T-cell (primary cell): ENCODE measurements at regions of chr3 and their contacts with region 1.

Region 1: DNA sequence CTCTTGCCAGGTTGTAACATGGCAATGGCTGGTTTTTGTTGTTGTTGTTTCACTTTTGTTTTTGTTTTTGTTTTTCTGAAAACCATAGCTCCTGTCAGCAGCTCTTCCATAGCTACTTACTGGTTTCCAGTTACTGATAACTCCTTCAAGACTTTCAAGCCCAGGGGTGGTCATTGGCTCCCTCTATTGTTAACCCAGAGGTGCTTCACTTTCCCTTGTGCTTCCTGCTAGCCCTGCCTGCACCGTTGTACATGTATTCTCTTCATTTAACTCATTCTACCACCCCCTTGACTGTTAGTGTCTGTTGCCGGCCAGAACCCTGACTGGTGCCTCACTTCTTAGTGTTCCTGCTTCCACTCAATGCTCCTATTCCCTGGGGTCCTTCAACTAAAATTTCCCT is 4.2 kb upstream of the TRAT1 start:
- DNase-seq: peak in 33 of 35 experiments; percentile 28 to 80 (median 57)
- ATAC-seq: peak; percentile 76 to 92 (median 88)
- H3K4me3 ChIP-seq: no peak overlapping the region
- H3K4me3 Mint-ChIP-seq: peak overlapping the region in 1 of 3 donors; percentile 18
- H3K27ac ChIP-seq: peak overlapping the region; percentile 40
- H3K27ac Mint-ChIP-seq: peak overlapping the region; percentile 71 to 86
- H3K4me1 ChIP-seq: peaks cover 14 to 21% of the 10 kb centered on the region in 2 experiments
- H3K4me1 Mint-ChIP-seq: peaks cover 30 to 35% (median 33%) of the 10 kb centered on the region in 3 donors
- H3K27me3 ChIP-seq: no peaks in the 10 kb centered on the region
- H3K27me3 Mint-ChIP-seq: no peaks in the 10 kb centered on the region

Region 2: GRCh38 chr3:108178676-108179075 is 639.7 kb before region 1 on chr3:
- CTCF ChIA-PET with region 1: no interaction called
- POLR2A ChIA-PET with region 1: no interaction called
- DNase-seq: no peak
- ATAC-seq: no peak
- H3K4me3 ChIP-seq: no peak overlapping the region
- H3K4me3 Mint-ChIP-seq: no peak overlapping the region
- H3K27ac ChIP-seq: no peak overlapping the region
- H3K27ac Mint-ChIP-seq: no peak overlapping the region
- H3K4me1 ChIP-seq: peaks cover 0 to 4% of the 10 kb centered on the region in 2 experiments
- H3K4me1 Mint-ChIP-seq: peaks cover 21 to 40% (median 25%) of the 10 kb centered on the region in 3 donors
- H3K27me3 ChIP-seq: no peaks in the 10 kb centered on the region
- H3K27me3 Mint-ChIP-seq: no peaks in the 10 kb centered on the region

Region 3: GRCh38 chr3:108602249-108602934 is 216.0 kb before region 1 on chr3:
- CTCF ChIA-PET with region 1: interaction called in 1 of 2 experiments, 12 read pairs
- POLR2A ChIA-PET with region 1: no interaction called
- DNase-seq: peak in 31 of 35 experiments; percentile 22 to 71 (median 34)
- ATAC-seq: peak; percentile 76 to 94 (median 84)
- H3K4me3 ChIP-seq: peak overlapping the region; percentile 20 to 35
- H3K4me3 Mint-ChIP-seq: peak overlapping the region; percentile 65 to 77 (median 73)
- H3K27ac ChIP-seq: peak overlapping the region; percentile 79
- H3K27ac Mint-ChIP-seq: peak overlapping the region; percentile 89 to 98
- H3K4me1 ChIP-seq: peaks cover 17 to 39% of the 10 kb centered on the region in 2 experiments
- H3K4me1 Mint-ChIP-seq: peaks cover 54 to 64% (median 61%) of the 10 kb centered on the region in 3 donors
- H3K27me3 ChIP-seq: no peaks in the 10 kb centered on the region
- H3K27me3 Mint-ChIP-seq: no peaks in the 10 kb centered on the region

Region 4: GRCh38 chr3:108662130-108662738 is 156.2 kb before region 1 on chr3:
- CTCF ChIA-PET with region 1: interaction called, 4 to 16 read pairs
- POLR2A ChIA-PET with region 1: no interaction called
- DNase-seq: peak in 31 of 35 experiments; percentile 10 to 88 (median 36)
- ATAC-seq: peak; percentile 67 to 77 (median 70)
- H3K4me3 ChIP-seq: no peak overlapping the region
- H3K4me3 Mint-ChIP-seq: no peak overlapping the region
- H3K27ac ChIP-seq: no peak overlapping the region
- H3K27ac Mint-ChIP-seq: no peak overlapping the region
- H3K4me1 ChIP-seq: peaks cover 0 to under 1% of the 10 kb centered on the region in 2 experiments
- H3K4me1 Mint-ChIP-seq: peaks cover 11 to 16% (median 11%) of the 10 kb centered on the region in 3 donors
- H3K27me3 ChIP-seq: no peaks in the 10 kb centered on the region
- H3K27me3 Mint-ChIP-seq: no peaks in the 10 kb centered on the region

Region 5: DNA sequence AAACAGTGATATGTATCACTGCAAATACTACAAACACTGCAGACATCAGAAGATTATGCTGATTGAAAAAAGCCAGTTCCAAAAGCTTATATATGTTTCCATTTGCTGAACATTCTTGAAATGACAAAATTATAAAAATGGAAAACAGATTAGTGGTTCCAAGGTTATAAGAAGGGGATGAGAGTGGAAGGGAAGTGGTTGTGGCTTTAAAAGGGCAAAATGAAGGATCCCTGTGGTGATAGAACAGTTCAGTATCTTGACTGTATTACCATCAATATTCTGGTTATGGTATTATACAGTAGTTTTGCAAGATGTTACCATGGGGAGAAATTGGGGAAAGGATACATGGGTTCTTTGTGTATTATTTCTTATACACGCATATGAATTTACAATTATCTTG is 151.1 kb before region 1 on chr3:
- CTCF ChIA-PET with region 1: interaction called, 4 to 16 read pairs
- POLR2A ChIA-PET with region 1: no interaction called
- DNase-seq: no peak
- ATAC-seq: no peak
- H3K4me3 ChIP-seq: no peak overlapping the region
- H3K4me3 Mint-ChIP-seq: no peak overlapping the region
- H3K27ac ChIP-seq: no peak overlapping the region
- H3K27ac Mint-ChIP-seq: no peak overlapping the region
- H3K4me1 ChIP-seq: peaks cover 0 to 3% of the 10 kb centered on the region in 2 experiments
- H3K4me1 Mint-ChIP-seq: peaks cover 4 to 15% (median 13%) of the 10 kb centered on the region in 3 donors
- H3K27me3 ChIP-seq: no peaks in the 10 kb centered on the region
- H3K27me3 Mint-ChIP-seq: no peaks in the 10 kb centered on the region

Region 6: DNA sequence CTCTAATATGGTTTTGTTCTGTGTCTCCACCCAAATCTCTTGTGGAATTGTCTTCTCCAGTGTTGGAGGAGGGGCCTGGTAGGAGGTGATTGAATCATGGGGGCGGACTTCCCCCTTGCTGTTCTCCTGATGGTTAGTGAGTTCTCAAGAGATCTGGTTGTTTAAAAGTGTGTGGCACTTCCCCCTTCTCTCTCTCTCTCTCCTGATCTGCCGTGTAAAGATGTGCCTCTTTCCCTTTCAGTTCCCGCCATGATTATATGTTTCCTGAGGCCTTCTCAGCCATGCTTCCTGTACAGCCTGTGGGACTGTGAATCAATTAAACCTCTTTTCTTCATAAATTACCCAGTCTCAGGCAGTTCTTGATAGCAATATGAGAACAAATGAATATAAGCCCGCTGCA is 94.3 kb before region 1 on chr3:
- CTCF ChIA-PET with region 1: no interaction called
- POLR2A ChIA-PET with region 1: no interaction called
- DNase-seq: no peak
- ATAC-seq: no peak
- H3K4me3 ChIP-seq: no peak overlapping the region
- H3K4me3 Mint-ChIP-seq: no peak overlapping the region
- H3K27ac ChIP-seq: no peak overlapping the region
- H3K27ac Mint-ChIP-seq: no peak overlapping the region
- H3K4me1 ChIP-seq: no peaks in the 10 kb centered on the region
- H3K4me1 Mint-ChIP-seq: peaks cover 2 to 7% (median 2%) of the 10 kb centered on the region in 3 donors
- H3K27me3 ChIP-seq: no peaks in the 10 kb centered on the region
- H3K27me3 Mint-ChIP-seq: no peaks in the 10 kb centered on the region

Region 7: GRCh38 chr3:108806316-108806715 is 12.1 kb before region 1 on chr3:
- CTCF ChIA-PET with region 1: interaction called in 1 of 2 experiments, 12 read pairs
- POLR2A ChIA-PET with region 1: interaction called in 1 of 2 experiments, 3 read pairs
- DNase-seq: peak in 28 of 35 experiments; percentile 7 to 80 (median 46)
- ATAC-seq: peak; percentile 87 to 96 (median 94)
- H3K4me3 ChIP-seq: no peak overlapping the region
- H3K4me3 Mint-ChIP-seq: peak overlapping the region; percentile 1 to 55 (median 50)
- H3K27ac ChIP-seq: peak overlapping the region; percentile 82
- H3K27ac Mint-ChIP-seq: peak overlapping the region; percentile 81 to 88
- H3K4me1 ChIP-seq: peaks cover 11 to 15% of the 10 kb centered on the region in 2 experiments
- H3K4me1 Mint-ChIP-seq: peaks cover 22 to 31% (median 26%) of the 10 kb centered on the region in 3 donors
- H3K27me3 ChIP-seq: no peaks in the 10 kb centered on the region
- H3K27me3 Mint-ChIP-seq: no peaks in the 10 kb centered on the region

Region 8: GRCh38 chr3:108835101-108835500 is 16.7 kb after region 1 on chr3:
- CTCF ChIA-PET with region 1: interaction called, 6 to 12 read pairs
- POLR2A ChIA-PET with region 1: interaction called, 5 to 9 read pairs
- DNase-seq: peak in 24 of 35 experiments; percentile 4 to 77 (median 38)
- ATAC-seq: peak; percentile 89 to 92 (median 89)
- H3K4me3 ChIP-seq: peak overlapping the region; percentile 18
- H3K4me3 Mint-ChIP-seq: peak overlapping the region; percentile 67 to 83 (median 73)
- H3K27ac ChIP-seq: peak overlapping the region; percentile 72
- H3K27ac Mint-ChIP-seq: peak overlapping the region; percentile 78 to 95
- H3K4me1 ChIP-seq: peaks cover 30 to 73% of the 10 kb centered on the region in 2 experiments
- H3K4me1 Mint-ChIP-seq: peaks cover 89 to 93% (median 89%) of the 10 kb centered on the region in 3 donors
- H3K27me3 ChIP-seq: no peaks in the 10 kb centered on the region
- H3K27me3 Mint-ChIP-seq: no peaks in the 10 kb centered on the region

Region 9: DNA sequence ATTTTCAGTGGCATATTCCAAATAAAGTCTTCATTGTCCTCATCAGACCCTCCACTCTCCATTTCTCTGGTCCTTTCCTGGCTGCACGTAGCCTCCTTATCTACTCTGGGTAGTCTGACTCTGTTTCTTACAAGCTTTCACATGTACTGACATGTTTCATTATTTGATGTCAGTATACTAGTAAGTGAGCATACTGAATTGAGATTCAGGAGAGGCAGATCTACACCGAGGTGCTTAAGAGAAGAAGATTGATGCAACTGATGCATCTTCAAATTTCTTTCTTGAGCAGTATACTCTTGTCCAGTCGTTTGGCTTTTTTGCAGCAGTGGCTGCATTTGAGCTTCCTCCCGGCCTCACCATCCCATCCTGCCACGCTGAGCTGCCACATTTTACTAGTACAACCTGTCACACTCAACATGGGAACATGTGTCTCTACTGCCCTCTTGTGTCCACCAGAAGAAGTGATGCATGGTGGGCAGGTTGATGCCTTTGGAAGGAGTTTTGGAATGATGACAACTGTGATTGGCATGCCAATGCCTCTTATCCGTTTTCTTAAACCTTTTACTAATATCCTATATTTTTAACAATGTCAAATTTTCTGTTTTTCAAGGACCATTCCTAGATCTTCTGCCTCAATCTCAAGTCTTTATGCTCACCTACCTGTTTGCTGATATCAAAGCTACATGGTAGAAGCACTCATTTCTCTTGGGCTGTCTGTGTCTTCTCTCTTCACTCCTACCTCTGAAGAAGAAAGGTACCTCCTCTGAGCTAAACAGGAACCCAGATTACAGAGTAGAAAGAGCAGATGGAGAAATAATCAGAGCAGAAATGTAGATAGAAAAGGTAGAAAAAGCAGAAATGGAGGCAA is 96.6 kb after region 1 on chr3:
- CTCF ChIA-PET with region 1: interaction called, 8 to 17 read pairs
- POLR2A ChIA-PET with region 1: interaction called in 1 of 2 experiments, 3 read pairs
- DNase-seq: peak; percentile 12 to 86 (median 50)
- ATAC-seq: peak; percentile 86 to 96 (median 96)
- H3K4me3 ChIP-seq: no peak overlapping the region
- H3K4me3 Mint-ChIP-seq: peak overlapping the region; percentile 41 to 59 (median 57)
- H3K27ac ChIP-seq: no peak overlapping the region
- H3K27ac Mint-ChIP-seq: peak overlapping the region; percentile 21 to 23
- H3K4me1 ChIP-seq: peaks cover 0 to 5% of the 10 kb centered on the region in 2 experiments
- H3K4me1 Mint-ChIP-seq: peaks cover 14 to 23% (median 20%) of the 10 kb centered on the region in 3 donors
- H3K27me3 ChIP-seq: no peaks in the 10 kb centered on the region
- H3K27me3 Mint-ChIP-seq: peaks cover 0 to 7% of the 10 kb centered on the region in 2 donors